Right ventricle myocardium superior (tissue), 1 donor: ENCODE measurements at regions of chr10 and their contacts with region 1.

Region 1: DNA sequence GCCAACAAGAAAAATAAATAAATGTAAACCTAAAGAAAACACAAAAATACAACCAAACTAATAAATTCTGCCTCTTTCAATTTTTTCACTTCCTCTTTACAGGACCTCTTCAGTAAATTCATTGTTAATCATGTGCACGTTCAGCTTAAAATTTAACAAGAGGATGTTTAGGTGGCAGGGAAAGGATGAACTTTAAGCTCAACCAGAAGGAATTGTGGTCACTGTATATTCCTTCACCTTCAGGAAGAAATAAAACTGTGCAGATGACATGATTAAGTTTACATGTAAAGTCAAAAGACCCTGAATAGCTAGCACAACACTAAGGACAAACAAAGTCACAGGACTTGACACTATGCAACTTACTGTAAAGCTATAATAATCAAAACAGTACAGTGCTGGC is 33.0 kb downstream of the KIF5B start:
- DNase-seq: no peak
- ATAC-seq: no peak

Region 2: GRCh38 chr10:31896947-31897384 is 126.3 kb before region 1 on chr10:
- intact Hi-C with region 1: no loop called
- DNase-seq: no peak
- ATAC-seq: peak; percentile 75

Region 3: DNA sequence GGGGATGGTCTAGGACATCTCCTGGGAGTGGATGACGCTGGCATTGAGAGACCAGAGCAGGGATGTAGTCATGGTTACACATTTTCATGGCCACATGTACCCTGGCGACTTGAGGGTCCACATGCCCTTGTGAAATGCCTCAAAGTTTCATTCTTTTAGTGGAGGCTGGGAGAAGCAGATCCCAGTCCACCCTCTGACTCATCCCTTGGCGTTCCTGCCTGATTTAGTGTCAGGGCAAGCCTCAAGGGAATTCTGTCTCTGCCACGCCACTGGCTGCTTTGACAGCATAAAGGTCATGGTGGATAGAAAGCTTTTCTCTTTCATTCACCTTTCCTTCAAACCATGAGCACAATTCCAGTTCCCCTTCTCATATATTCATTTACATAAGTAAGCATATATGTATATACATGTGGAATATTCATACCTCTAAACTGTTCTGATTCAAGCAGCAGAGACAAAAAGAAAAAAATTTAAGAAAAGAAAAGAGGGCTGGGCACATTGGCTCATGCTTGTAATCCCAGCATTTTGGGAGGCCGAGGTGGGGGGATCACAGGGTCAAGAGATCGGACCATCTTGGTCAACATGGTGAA is 54.7 kb after region 1 on chr10:
- intact Hi-C with region 1: no loop called
- DNase-seq: peak; percentile 56
- ATAC-seq: peak; percentile 49

Region 4: GRCh38 chr10:32199724-32200394 is 176.6 kb after region 1 on chr10:
- intact Hi-C with region 1: no loop called
- DNase-seq: no peak
- ATAC-seq: no peak

Region 5: DNA sequence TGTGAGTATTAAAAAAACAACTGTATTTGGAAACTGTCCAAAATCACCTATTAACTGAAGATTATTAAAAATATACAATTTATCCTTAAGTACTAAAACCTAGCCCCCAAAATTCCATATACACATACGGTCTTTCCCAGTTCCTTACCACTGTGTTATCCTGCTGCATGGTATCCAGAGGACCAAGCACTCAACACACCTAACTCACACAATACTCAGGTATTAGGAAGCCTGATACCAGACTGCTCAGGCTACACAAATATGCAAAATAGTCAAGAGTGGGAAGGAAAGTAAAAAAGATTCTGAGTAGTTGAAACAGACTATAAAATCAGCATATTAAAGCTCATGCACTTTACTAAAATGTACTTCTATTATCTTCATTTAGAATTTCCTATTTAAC is 256.5 kb after region 1 on chr10:
- intact Hi-C with region 1: loop called (anchors 10 kb)
- DNase-seq: no peak
- ATAC-seq: no peak